H1 (cell line): ENCODE measurements at regions of chr22 and their contacts with region 1.

Region 1: DNA sequence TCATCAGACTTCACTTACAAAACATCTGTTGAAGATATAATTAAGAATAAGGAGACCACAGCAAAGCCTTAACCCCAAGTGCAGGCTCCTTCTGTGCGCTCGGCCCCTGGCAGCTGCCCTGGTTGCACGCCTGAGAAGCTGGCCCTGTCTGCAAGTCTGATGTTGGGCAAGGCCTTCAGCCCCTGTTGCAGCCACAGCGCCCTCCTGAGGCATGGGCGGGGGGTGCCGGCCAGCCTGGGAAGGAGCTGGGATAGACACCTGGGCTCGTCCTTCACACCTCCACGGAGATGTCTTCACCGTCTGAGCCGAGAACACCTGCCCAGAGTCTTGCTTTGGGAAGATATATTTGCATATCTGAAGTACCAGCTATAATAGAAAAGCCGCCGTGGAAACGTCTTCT is 104.1 kb downstream of the MPPED1 start:
- DNase-seq: peak in 1 of 2 experiments; percentile 87
- H3K4me3 ChIP-seq: no peak overlapping the region
- H3K27ac ChIP-seq: no peak overlapping the region
- H3K4me1 ChIP-seq: peaks cover 0 to 2% (median 0%) of the 10 kb centered on the region in 4 experiments; a peak in 2 of 7 replicates
- H3K27me3 ChIP-seq: no peaks in the 10 kb centered on the region
- CTCF ChIP-seq: peak; percentile 80 to 89 (median 86)
- EP300 ChIP-seq: no peak
- POLR2A ChIP-seq: no peak
- RAD21 ChIP-seq: peak; percentile 63 to 79

Region 2: DNA sequence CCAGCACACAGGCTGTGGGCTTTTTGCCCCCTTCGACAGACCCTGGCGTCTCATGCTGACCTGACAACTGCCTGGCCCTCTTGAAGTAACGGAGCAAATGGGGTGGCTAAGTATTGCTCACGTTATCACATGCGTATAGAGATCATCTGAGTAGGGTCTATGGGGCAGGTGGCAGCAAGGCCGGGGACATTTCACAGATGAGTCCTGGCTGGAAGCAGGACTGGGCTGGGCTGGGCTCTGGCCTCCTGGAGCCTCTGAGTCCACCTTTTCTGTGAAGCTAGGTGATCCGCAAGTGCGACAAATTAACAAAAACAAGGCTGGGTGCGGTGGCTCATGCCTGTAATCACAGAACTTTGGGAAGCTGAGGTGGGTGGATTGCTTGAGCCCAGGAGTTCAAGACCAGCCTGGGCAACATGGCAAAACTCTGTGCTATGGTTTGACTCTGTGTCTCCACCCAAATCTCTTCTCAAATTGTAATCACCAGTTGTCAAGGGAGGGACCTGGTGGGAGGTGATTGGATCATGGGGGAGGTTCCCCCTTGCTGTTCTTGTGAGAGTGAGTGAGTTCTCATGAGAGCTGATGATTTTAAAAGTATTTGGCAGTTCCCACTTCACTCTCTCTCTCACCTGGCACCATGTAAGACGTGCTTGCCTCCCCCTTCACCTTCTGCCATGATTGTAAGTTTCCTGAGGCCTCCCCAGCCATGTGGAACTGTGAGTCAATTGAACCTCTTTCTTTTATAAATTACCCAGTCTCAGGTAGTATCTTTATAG is 17.9 kb after region 1 on chr22:
- CTCF ChIA-PET with region 1: interaction called, 14 read pairs
- POLR2A ChIA-PET with region 1: no interaction called
- DNase-seq: no peak
- H3K4me3 ChIP-seq: no peak overlapping the region
- H3K27ac ChIP-seq: no peak overlapping the region
- H3K4me1 ChIP-seq: no peaks in the 10 kb centered on the region; a peak in 1 of 7 replicates
- H3K27me3 ChIP-seq: no peaks in the 10 kb centered on the region
- CTCF ChIP-seq: no peak
- EP300 ChIP-seq: no peak
- POLR2A ChIP-seq: no peak
- RAD21 ChIP-seq: no peak